Activated naive CD4-positive, alpha-beta T cell treated with anti-CD3 and anti-CD28 coated beads, Interleukin-2, amount 10 ng/mL, durations not matched to agents 7 days and 5 days (primary cell): ENCODE measurements at regions of chr1 and their contacts with region 1.

Region 1: GRCh38 chr1:211514030-211514754 is 22.2 kb upstream of the RD3 start:
- DNase-seq: peak; percentile 81
- H3K4me3 Mint-ChIP-seq: no peak overlapping the region
- H3K27ac Mint-ChIP-seq: no peak overlapping the region
- H3K4me1 Mint-ChIP-seq: peaks cover 39% of the 10 kb centered on the region
- H3K27me3 Mint-ChIP-seq: peaks cover 41% of the 10 kb centered on the region

Region 2: GRCh38 chr1:211133836-211134669 is 380.1 kb before region 1 on chr1 and contains the start of gene KCNH1:
- CTCF ChIA-PET with region 1: interaction called, 18 read pairs
- DNase-seq: peak; percentile 79
- H3K4me3 Mint-ChIP-seq: peak within 1 kb of the TSS; percentile 54
- H3K27ac Mint-ChIP-seq: no peak within 1 kb of the TSS
- H3K4me1 Mint-ChIP-seq: peaks cover 8% of the 10 kb centered on the region
- H3K27me3 Mint-ChIP-seq: peaks cover 41% of the 10 kb centered on the region

Region 3: GRCh38 chr1:211145944-211146343 is 368.2 kb before region 1 on chr1:
- CTCF ChIA-PET with region 1: no interaction called
- DNase-seq: no peak
- H3K4me3 Mint-ChIP-seq: no peak overlapping the region
- H3K27ac Mint-ChIP-seq: no peak overlapping the region
- H3K4me1 Mint-ChIP-seq: no peaks in the 10 kb centered on the region
- H3K27me3 Mint-ChIP-seq: peaks cover 13% of the 10 kb centered on the region

Region 4: DNA sequence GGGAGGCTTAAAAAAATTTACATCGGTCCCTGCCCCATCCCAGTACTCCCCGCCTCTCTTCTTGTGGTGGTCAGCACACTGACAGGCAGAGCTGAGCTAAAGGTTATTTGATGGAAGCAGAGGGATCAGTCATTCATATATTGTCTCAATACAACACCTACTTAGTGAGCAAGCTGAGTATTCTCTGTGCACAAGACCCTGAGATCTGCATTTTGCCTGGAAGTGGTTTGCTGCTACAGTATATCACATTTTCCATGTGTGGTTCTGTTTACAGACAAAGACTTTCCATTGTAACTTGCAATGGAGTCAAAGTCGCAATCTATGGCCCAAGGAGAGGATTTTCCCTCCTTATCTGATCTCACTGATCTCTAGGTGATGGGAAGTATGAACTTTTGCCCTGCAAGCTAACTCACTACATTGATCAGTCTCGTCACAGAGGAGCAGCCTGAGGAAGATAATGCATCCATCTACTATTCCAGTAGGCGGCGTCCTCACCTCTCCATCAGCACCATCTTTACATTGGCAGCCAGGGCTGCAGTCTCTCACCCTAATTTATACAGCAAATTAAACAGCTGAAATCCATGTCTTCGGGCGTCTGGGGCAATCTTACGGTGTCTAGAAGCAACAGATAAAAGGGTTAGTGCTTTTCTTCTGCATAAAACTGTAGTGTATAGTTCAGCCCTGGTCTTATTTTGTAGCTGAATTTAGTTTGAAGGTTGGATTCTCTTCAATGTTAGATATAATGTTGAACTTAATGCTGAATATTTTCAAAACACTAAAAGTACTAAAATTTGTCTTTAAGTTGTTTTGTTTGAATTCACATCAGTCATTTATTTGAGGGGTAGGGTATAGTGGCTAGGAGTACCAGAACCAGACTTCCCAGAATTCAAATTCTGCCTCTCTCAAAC is 190.8 kb before region 1 on chr1:
- CTCF ChIA-PET with region 1: interaction called, 72 read pairs
- DNase-seq: peak; percentile 80
- H3K4me3 Mint-ChIP-seq: no peak overlapping the region
- H3K27ac Mint-ChIP-seq: no peak overlapping the region
- H3K4me1 Mint-ChIP-seq: peaks cover 47% of the 10 kb centered on the region
- H3K27me3 Mint-ChIP-seq: no peaks in the 10 kb centered on the region

Region 5: DNA sequence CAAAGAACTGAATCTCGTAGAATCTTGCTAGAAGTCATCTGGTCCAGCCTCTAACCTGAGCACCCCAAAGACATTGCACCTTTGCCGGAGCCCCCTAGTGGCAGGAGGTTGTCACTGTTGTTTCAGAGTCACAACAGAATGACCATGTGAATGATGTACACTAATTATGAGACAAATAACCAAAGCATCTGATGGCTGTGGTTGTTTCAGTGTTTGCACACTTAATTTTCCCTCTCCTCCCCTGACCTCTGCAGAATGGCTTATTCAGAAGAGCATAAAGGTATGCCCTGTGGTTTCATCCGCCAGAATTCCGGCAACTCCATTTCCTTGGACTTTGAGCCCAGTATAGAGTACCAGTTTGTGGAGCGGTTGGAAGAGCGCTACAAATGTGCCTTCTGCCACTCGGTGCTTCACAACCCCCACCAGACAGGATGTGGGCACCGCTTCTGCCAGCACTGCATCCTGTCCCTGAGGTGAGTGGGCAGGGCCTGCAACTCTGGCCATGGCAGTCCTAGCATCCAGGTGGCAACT is 161.1 kb before region 1 on chr1:
- CTCF ChIA-PET with region 1: no interaction called
- DNase-seq: peak; percentile 69
- H3K4me3 Mint-ChIP-seq: peak overlapping the region; percentile 55
- H3K27ac Mint-ChIP-seq: peak overlapping the region; percentile 82
- H3K4me1 Mint-ChIP-seq: peaks cover 56% of the 10 kb centered on the region
- H3K27me3 Mint-ChIP-seq: no peaks in the 10 kb centered on the region

Region 6: GRCh38 chr1:211469938-211470529 is 44.2 kb before region 1 on chr1:
- CTCF ChIA-PET with region 1: interaction called, 25 read pairs
- DNase-seq: peak; percentile 53
- H3K4me3 Mint-ChIP-seq: no peak overlapping the region
- H3K27ac Mint-ChIP-seq: no peak overlapping the region
- H3K4me1 Mint-ChIP-seq: no peaks in the 10 kb centered on the region
- H3K27me3 Mint-ChIP-seq: peaks cover 35% of the 10 kb centered on the region

Region 7: GRCh38 chr1:211476200-211476849 is 37.9 kb before region 1 on chr1:
- CTCF ChIA-PET with region 1: interaction called, 22 read pairs
- DNase-seq: peak; percentile 87
- H3K4me3 Mint-ChIP-seq: no peak overlapping the region
- H3K27ac Mint-ChIP-seq: no peak overlapping the region
- H3K4me1 Mint-ChIP-seq: peaks cover 3% of the 10 kb centered on the region
- H3K27me3 Mint-ChIP-seq: peaks cover 49% of the 10 kb centered on the region

Region 8: GRCh38 chr1:211579434-211580302 is 65.5 kb after region 1 on chr1:
- CTCF ChIA-PET with region 1: interaction called, 12 read pairs
- DNase-seq: no peak
- H3K4me3 Mint-ChIP-seq: peak overlapping the region; percentile 74
- H3K27ac Mint-ChIP-seq: peak overlapping the region; percentile 29
- H3K4me1 Mint-ChIP-seq: peaks cover 60% of the 10 kb centered on the region
- H3K27me3 Mint-ChIP-seq: peaks cover 7% of the 10 kb centered on the region

Region 9: GRCh38 chr1:211589782-211590721 is 75.9 kb after region 1 on chr1:
- CTCF ChIA-PET with region 1: no interaction called
- DNase-seq: no peak
- H3K4me3 Mint-ChIP-seq: no peak overlapping the region
- H3K27ac Mint-ChIP-seq: no peak overlapping the region
- H3K4me1 Mint-ChIP-seq: peaks cover 4% of the 10 kb centered on the region
- H3K27me3 Mint-ChIP-seq: peaks cover 13% of the 10 kb centered on the region

Region 10: DNA sequence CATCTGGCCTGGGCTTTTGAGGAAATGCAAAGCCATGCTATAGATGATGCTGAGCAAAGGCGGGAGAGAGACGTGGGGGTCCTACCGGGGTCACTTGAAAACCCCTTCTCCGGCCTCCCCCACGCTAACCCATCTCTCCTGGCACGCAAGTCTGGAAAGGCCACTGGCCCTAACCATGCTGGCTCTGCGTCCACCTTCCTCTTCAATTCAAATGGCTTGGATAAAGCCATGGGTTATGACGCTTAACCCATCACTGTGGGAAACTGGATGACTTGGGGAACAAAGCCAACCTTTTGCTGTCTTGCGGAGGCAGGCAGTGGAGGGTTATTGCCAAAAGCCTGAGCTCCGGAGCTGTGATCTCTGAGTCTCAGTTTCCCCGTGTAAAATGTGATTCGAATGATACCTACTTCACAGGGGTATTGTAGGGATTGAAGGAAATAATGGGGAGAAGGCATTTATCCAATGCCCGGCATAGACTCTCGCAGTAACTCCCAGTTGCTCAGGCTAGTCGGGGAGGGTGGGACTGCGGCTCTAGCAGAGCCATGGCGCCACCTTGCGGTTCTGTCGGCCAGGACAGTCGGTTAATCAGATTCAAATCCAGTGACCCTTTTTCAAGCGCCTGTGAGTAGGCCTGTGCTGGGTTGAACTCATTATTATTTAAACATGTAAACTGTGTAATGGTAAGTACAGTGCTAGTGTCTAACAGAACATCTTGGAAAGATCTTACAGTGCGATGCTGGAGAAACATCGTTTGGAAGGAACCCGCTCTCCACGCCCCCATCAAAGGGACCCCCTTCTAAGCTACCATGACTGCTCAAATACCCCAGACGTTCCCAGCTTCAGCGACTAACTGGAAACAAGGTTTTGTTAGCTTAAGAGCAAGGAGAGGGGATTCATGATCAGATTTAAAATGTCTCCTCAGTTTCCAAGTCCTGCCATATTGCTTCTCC is 140.9 kb after region 1 on chr1:
- CTCF ChIA-PET with region 1: interaction called, 49 read pairs
- DNase-seq: peak; percentile 88
- H3K4me3 Mint-ChIP-seq: no peak overlapping the region
- H3K27ac Mint-ChIP-seq: no peak overlapping the region
- H3K4me1 Mint-ChIP-seq: no peaks in the 10 kb centered on the region
- H3K27me3 Mint-ChIP-seq: peaks cover 20% of the 10 kb centered on the region